Activated CD4-positive, alpha-beta T cell treated with anti-CD3 and anti-CD28 coated beads for 36 hours (primary cell): ENCODE measurements at regions of chr18 and their contacts with region 1.

Region 1: GRCh38 chr18:79523736-79524180 is 128.0 kb downstream of the NFATC1 start:
- DNase-seq: peak; percentile 90
- ATAC-seq: peak; percentile 49
- H3K4me3 Mint-ChIP-seq: peak overlapping the region; percentile 74
- H3K27ac Mint-ChIP-seq: peak overlapping the region; percentile 94
- H3K4me1 Mint-ChIP-seq: peaks cover 89% of the 10 kb centered on the region
- H3K27me3 Mint-ChIP-seq: no peaks in the 10 kb centered on the region

Region 2: GRCh38 chr18:79068937-79069791 is 454.6 kb before region 1 on chr18 and contains the start of gene ATP9B:
- CTCF ChIA-PET with region 1: no interaction called
- POLR2A ChIA-PET with region 1: no interaction called
- intact Hi-C with region 1: loop called in 1 of 2 experiments (anchors 2 kb)
- DNase-seq: peak; percentile 99
- ATAC-seq: peak; percentile 83
- H3K4me3 Mint-ChIP-seq: peak within 1 kb of the TSS; percentile 87
- H3K27ac Mint-ChIP-seq: peak within 1 kb of the TSS; percentile 99
- H3K4me1 Mint-ChIP-seq: peaks cover 38% of the 10 kb centered on the region
- H3K27me3 Mint-ChIP-seq: peaks cover 11% of the 10 kb centered on the region
- total RNA-seq, gene ATP9B: 19.4 to 20.8 TPM

Region 3: GRCh38 chr18:79317718-79318117 is 206.0 kb before region 1 on chr18:
- CTCF ChIA-PET with region 1: no interaction called
- POLR2A ChIA-PET with region 1: no interaction called
- intact Hi-C with region 1: no loop called
- DNase-seq: no peak
- ATAC-seq: no peak
- H3K4me3 Mint-ChIP-seq: no peak overlapping the region
- H3K27ac Mint-ChIP-seq: no peak overlapping the region
- H3K4me1 Mint-ChIP-seq: peaks cover 14% of the 10 kb centered on the region
- H3K27me3 Mint-ChIP-seq: no peaks in the 10 kb centered on the region

Region 4: GRCh38 chr18:79400091-79400590 is 123.6 kb before region 1 on chr18:
- CTCF ChIA-PET with region 1: interaction called, 18 read pairs
- POLR2A ChIA-PET with region 1: interaction called, 44 read pairs
- intact Hi-C with region 1: loop called (anchors 1 kb)
- DNase-seq: peak; percentile 86
- ATAC-seq: no peak
- H3K4me3 Mint-ChIP-seq: peak overlapping the region; percentile 83
- H3K27ac Mint-ChIP-seq: no peak overlapping the region
- H3K4me1 Mint-ChIP-seq: peaks cover 45% of the 10 kb centered on the region
- H3K27me3 Mint-ChIP-seq: no peaks in the 10 kb centered on the region

Region 5: DNA sequence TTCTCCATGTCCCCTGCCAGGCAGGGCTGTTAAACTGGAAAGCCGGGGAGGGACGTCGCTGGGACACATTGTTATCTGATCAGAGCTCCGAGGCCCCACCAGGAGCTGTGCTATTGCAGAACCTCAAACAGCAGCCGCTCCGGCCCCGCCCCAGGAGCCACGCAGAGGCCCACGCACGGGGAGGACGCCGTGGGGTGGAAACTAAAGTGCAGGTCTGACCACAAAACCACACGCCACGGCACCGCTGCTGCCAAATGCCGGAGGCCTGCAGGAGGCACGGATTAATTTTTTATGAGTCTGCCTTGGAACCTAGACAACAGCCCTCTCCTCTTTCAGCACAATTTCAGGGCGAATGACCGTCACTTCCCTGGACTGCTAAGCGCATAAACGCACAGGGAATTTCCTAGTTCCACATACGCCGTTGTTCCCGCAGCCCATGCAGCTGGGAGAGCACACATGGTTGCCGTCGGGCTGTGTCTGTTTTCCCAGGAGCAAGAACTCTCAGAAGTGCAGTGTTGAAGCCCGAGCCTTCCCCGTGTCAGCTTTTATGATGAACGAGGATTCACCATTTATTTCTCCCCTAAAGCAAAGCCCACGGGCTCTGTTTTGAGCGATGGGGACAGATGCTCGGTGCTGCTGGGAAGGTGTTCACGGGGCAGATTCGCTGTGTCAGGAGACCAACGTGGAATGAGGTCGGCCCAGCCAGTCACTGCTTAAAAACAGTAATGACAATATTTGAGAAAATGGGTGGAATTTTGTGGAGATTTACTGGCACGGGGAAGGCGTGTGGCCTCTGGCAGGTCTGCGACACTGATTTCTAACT is 84.3 kb before region 1 on chr18:
- CTCF ChIA-PET with region 1: interaction called, 7 read pairs
- POLR2A ChIA-PET with region 1: interaction called, 19 read pairs
- intact Hi-C with region 1: loop called (anchors 1 to 2 kb)
- DNase-seq: peak; percentile 61
- ATAC-seq: no peak
- H3K4me3 Mint-ChIP-seq: no peak overlapping the region
- H3K27ac Mint-ChIP-seq: peak overlapping the region; percentile 65
- H3K4me1 Mint-ChIP-seq: peaks cover 61% of the 10 kb centered on the region
- H3K27me3 Mint-ChIP-seq: no peaks in the 10 kb centered on the region

Region 6: GRCh38 chr18:79679111-79679872 is 155.5 kb after region 1 on chr18 and contains the start of gene CTDP1:
- CTCF ChIA-PET with region 1: no interaction called
- POLR2A ChIA-PET with region 1: interaction called, 6 read pairs
- intact Hi-C with region 1: loop called (anchors 1 to 2 kb)
- DNase-seq: peak; percentile 99
- ATAC-seq: peak; percentile 91
- H3K4me3 Mint-ChIP-seq: peak within 1 kb of the TSS; percentile 90
- H3K27ac Mint-ChIP-seq: peak within 1 kb of the TSS; percentile 97
- H3K4me1 Mint-ChIP-seq: peaks cover 65% of the 10 kb centered on the region
- H3K27me3 Mint-ChIP-seq: no peaks in the 10 kb centered on the region
- total RNA-seq, gene CTDP1: 36.7 to 45.5 TPM

Region 7: DNA sequence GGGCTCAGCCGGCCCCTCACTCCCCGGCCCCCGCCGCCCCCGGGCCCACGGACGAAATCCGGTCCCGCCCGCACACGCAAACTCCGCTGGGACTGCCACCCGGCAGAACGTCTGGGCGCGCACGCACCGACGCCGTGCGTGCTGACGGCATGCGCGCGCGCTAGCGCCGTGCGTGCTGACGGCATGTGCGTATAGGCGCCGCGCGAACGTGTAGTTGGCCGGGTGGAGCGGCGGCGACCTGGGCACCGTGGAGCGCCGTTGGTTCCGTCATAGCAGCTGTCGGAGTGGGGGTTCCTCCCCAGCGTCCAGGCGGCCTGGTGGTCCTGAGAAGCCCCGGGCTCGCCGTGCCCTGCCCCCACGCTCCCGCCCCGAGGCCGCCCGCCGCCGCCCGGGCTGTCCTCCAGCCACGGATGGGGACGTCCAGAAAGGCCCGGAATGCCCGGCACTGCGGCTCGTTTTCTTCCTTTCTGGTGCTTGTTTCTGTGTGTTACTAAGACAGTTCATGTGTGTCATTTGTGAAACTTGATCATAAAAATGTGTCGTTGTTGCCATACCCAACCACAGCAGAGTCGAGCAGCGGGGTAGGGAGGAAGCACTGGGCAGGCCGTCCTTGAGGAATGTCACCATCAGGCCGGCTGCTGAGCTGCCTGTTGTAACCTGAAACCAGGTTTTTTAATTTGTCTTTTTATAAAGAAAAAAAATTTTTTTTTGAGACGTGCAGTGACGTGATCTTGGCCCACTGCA is 464.9 kb after region 1 on chr18 and contains the start of gene TXNL4A:
- CTCF ChIA-PET with region 1: no interaction called
- POLR2A ChIA-PET with region 1: no interaction called
- intact Hi-C with region 1: loop called in 1 of 2 experiments (anchors 5 kb)
- DNase-seq: peak; percentile 92
- ATAC-seq: peak; percentile 98
- H3K4me3 Mint-ChIP-seq: peak within 1 kb of the TSS; percentile 92
- H3K27ac Mint-ChIP-seq: peak within 1 kb of the TSS; percentile 98
- H3K4me1 Mint-ChIP-seq: peaks cover 31% of the 10 kb centered on the region
- H3K27me3 Mint-ChIP-seq: no peaks in the 10 kb centered on the region
- total RNA-seq, gene TXNL4A: 150 to 194 TPM

Region 8: DNA sequence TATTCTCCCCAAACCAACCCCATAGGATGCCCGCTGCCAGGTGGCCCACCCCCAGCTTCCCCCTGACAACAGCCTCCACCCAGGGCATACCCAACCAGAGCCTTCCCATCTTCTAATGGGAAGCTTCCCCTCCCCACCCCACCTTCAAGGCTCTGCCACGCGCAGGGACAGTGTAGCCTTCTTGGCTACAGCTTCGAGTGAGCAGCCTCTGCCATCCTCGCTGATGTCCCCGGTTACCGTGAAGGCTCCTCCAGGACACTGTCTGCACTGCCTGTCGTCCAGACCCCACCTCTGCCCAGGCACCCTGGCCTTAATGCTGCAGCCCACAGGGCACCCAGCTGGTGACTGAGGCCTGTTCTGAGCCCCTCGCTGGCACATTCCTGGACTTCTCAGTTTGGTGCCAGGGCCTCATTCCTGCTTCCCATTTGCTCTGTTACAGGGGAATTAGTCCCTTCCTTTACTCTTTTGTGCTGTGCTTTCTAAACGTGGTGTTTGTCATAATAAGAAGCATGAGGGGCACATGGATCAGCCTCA is 572.3 kb after region 1 on chr18:
- CTCF ChIA-PET with region 1: no interaction called
- POLR2A ChIA-PET with region 1: no interaction called
- intact Hi-C with region 1: no loop called
- DNase-seq: no peak
- ATAC-seq: no peak
- H3K4me3 Mint-ChIP-seq: no peak overlapping the region
- H3K27ac Mint-ChIP-seq: no peak overlapping the region
- H3K4me1 Mint-ChIP-seq: no peaks in the 10 kb centered on the region
- H3K27me3 Mint-ChIP-seq: peaks cover 3% of the 10 kb centered on the region